ENCODE measurements at regions of chr1 and their contacts with region 1.

Region 1: GRCh38 chr1:179882243-179883039 is at the start of gene TOR1AIP1:
- DNase-seq: peak; percentile 97
- H3K4me3 ChIP-seq: peak within 1 kb of the TSS; percentile 65
- H3K4me3 Mint-ChIP-seq: peak within 1 kb of the TSS; percentile 95
- H3K27ac Mint-ChIP-seq: peak within 1 kb of the TSS; percentile 100
- H3K4me1 ChIP-seq: peaks cover 10% of the 10 kb centered on the region
- H3K4me1 Mint-ChIP-seq: peaks cover 19% of the 10 kb centered on the region
- H3K27me3 ChIP-seq: no peaks in the 10 kb centered on the region
- H3K27me3 Mint-ChIP-seq: no peaks in the 10 kb centered on the region
- CTCF ChIP-seq: peak; percentile 17 to 60
- total RNA-seq, gene TOR1AIP1: 25.4 and 30.3 TPM in 2 replicates

Region 2: DNA sequence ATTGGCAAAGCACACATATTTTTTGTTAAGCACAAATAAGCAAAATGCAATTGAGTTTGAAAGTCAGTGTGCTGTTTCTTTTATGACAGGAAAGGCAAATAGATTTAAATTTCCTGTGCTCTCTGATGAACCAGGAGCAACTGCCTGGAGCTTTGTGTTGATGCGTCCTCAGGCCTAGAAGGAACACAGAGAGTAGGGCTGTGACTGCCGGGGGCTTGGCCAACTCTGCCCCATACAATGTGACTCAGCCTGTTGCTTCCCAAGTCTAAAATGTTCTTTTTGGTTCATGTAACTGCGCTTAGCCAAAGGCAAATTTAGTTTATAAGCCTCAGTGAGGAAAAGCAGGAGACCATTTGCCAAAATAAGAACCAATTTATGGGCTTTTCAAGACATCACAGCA is 42.3 kb before region 1 on chr1:
- CTCF ChIA-PET with region 1: no interaction called
- POLR2A ChIA-PET with region 1: no interaction called
- intact Hi-C with region 1: loop called (anchors 1 kb)
- DNase-seq: no peak
- H3K4me3 ChIP-seq: no peak overlapping the region
- H3K4me3 Mint-ChIP-seq: no peak overlapping the region
- H3K27ac Mint-ChIP-seq: no peak overlapping the region
- H3K4me1 ChIP-seq: peaks cover 10% of the 10 kb centered on the region
- H3K4me1 Mint-ChIP-seq: no peaks in the 10 kb centered on the region
- H3K27me3 ChIP-seq: no peaks in the 10 kb centered on the region
- H3K27me3 Mint-ChIP-seq: no peaks in the 10 kb centered on the region
- CTCF ChIP-seq: no peak

Region 3: GRCh38 chr1:179856296-179856695 is 26.1 kb before region 1 on chr1:
- CTCF ChIA-PET with region 1: no interaction called
- POLR2A ChIA-PET with region 1: no interaction called
- intact Hi-C with region 1: no loop called
- DNase-seq: no peak
- H3K4me3 ChIP-seq: no peak overlapping the region
- H3K4me3 Mint-ChIP-seq: no peak overlapping the region
- H3K27ac Mint-ChIP-seq: no peak overlapping the region
- H3K4me1 ChIP-seq: no peaks in the 10 kb centered on the region; the same call in 1 of the 2 replicates
- H3K4me1 Mint-ChIP-seq: no peaks in the 10 kb centered on the region
- H3K27me3 ChIP-seq: no peaks in the 10 kb centered on the region
- H3K27me3 Mint-ChIP-seq: no peaks in the 10 kb centered on the region
- CTCF ChIP-seq: no peak

Region 4: DNA sequence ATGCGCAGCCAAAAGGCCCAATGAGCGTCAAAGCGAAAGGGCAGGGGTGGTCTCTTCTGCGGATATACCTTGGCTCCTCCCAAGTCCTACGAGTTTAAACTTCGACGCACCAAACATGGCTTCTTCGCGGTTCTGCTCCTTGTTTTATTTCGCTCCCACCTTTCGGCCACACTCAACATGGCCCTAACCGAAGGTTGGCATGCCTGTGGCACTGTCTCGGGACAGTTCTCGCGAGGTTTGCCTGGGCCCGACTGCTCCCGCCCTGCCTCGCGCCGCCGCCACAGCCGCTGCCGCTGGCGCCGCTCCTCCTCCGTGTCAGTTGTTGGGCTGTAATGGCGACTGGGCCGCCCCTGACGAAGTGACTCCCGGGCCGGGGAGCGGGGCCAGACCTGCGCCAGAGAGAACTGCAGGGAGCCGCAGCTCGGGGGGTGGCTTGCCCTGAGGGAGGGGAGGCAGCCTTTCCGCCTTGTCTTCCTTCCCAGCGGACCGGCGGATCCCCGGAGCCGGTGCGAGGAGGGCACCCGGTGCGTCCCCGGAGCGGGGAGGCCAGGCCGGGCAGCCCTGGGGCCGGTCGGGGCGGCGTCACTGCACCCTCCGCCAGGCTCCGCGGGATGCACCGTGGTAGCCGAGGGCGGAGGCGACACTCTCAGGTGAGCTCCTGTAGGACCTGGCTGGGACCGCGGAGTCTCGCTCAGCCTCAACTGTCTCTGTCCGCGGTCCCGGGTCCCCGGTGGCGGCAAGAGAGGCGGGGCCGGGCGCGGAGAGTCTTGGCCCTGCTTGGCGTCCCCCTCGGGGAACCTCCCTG is 72.3 kb after region 1 on chr1 and contains the start of gene CEP350:
- CTCF ChIA-PET with region 1: no interaction called
- POLR2A ChIA-PET with region 1: interaction called, 5 read pairs
- intact Hi-C with region 1: loop called (anchors 1 kb)
- DNase-seq: peak; percentile 98 to 99
- H3K4me3 ChIP-seq: peak within 1 kb of the TSS; percentile 73
- H3K4me3 Mint-ChIP-seq: peak within 1 kb of the TSS; percentile 83
- H3K27ac Mint-ChIP-seq: peak within 1 kb of the TSS; percentile 30
- H3K4me1 ChIP-seq: 0 out of 2 replicates have a peak, but pooled peaks cover 8% of the 10 kb centered on the region
- H3K4me1 Mint-ChIP-seq: peaks cover 14% of the 10 kb centered on the region
- H3K27me3 ChIP-seq: no peaks in the 10 kb centered on the region
- H3K27me3 Mint-ChIP-seq: no peaks in the 10 kb centered on the region
- CTCF ChIP-seq: no peak
- total RNA-seq, gene CEP350: 40.3 and 43.5 TPM in 2 replicates

Measured in Caco-2 (cell line).